AG04449 (cell line): ENCODE measurements at regions of chr12 and their contacts with region 1.

Region 1: DNA sequence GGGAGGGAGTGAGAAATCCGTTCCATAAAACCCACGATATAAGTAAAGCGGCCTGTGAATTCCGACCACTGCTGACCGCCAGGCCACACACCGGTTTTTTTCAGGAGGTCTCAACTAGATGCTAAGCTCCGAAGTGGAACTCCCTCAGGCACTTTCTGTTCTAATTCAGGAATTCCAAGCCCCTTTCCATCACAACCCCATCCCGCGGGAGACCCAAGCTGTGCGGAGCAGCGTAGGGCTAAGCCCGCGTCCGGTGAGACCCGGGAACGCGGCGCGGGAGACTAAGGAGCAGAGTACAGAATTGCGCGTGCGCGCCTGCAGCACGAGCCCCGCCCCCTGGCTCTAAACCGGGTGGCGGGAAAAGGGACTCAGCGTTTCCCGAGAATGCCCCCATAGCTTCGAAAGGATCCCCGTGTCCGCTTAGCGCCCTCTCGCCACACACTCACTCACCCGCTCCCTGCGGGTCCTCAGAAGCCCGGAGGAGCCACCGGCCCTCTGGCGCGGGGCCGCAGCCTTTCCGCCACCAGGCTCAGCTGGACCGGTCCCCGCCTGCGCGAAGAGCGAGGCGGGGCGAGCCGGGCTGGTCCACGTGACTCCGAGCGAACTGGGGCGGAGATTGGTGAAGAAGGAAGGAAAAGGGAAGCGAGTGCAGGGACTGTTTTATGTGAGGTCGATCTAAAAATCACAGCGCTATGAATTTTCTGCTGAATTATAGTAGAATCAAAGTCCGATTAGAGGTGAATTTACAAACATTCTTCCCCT is at the start of gene TIMELESS:
- DNase-seq: peak; percentile 17
- H3K4me3 ChIP-seq: peak within 1 kb of the TSS; percentile 80
- CTCF ChIP-seq: no peak

Region 2: GRCh38 chr12:56299853-56300643 is 149.0 kb before region 1 on chr12 and contains the start of gene CS:
- CTCF ChIA-PET with region 1: no interaction called
- POLR2A ChIA-PET with region 1: no interaction called
- DNase-seq: peak; percentile 67
- H3K4me3 ChIP-seq: peak within 1 kb of the TSS; percentile 93
- CTCF ChIP-seq: no peak

Region 3: DNA sequence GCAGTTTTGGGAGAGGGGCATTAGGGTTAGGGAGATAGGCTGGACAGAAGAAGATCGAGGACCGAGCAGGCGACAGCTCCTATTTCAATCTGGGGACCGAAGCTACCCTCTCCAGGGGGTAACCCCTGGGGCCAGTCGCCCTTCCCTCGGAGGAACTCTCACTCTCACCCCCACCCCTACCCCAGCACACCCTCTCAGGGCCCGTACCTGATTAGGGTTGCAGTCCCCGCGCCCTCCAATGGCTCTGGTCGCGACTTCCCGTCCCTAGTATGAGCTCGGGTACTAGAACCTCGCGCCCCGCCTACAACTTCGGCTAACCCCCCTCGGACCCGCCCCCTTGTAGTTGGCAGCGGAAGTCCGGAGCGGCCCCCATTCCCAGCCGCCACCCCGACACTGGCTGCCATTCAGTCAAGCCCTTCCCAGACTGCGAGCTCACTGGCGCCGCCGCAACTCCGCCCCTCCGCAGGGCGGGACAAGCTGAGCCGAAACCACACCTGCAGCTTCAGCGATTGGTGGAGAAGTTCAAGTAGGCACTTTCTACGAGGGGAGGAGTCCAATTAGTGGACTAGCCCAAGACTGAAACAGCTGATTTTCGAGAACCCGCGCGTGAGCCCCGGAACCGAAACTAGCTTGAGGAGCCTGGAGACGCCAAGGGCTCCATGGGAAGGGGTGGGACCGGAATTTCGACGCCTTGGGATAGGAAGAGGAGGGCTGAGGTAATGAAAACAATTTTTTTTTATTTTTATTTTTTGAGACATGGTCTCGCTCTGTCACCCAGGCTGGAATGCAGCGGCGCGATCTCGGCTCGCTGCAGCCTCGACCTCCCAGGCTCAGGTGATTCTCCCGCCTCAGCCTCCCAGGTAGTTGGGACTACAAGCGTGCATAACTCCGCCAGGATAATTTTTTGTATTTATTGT is 88.9 kb before region 1 on chr12 and contains the start of gene STAT2:
- CTCF ChIA-PET with region 1: interaction called, 4 read pairs
- POLR2A ChIA-PET with region 1: interaction called, 11 read pairs
- DNase-seq: peak; percentile 99
- H3K4me3 ChIP-seq: peak within 1 kb of the TSS; percentile 90
- CTCF ChIP-seq: no peak

Region 4: DNA sequence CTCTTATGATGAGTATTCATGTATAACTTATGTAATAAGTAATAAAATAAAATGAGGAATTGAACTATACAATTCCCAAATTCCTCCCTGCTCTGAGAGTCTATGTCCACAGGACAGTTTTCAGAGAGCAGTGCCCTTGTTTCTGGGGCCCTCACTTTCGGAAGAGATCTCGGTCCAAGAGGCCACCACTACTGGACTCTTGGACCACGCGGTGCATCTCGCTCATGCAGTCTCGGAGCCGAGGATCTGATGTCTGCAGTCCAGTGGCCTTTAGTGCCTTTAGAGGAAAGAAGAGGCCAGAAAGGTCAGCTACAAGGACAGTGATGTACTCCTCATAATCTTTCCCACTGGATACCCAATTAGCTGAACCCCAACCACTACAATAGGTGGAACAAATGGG is 30.6 kb after region 1 on chr12:
- CTCF ChIA-PET with region 1: no interaction called
- POLR2A ChIA-PET with region 1: no interaction called
- DNase-seq: no peak
- H3K4me3 ChIP-seq: no peak overlapping the region
- CTCF ChIP-seq: no peak